ENCODE measurements at regions of chr7 and their contacts with region 1.

Region 1: GRCh38 chr7:56074371-56074791 is 10.3 kb downstream of the SUMF2 start:
- DNase-seq: peak; percentile 77
- H3K4me3 Mint-ChIP-seq: no peak overlapping the region
- H3K27ac Mint-ChIP-seq: no peak overlapping the region
- H3K4me1 Mint-ChIP-seq: peaks cover 4% of the 10 kb centered on the region
- H3K27me3 Mint-ChIP-seq: no peaks in the 10 kb centered on the region

Region 2: DNA sequence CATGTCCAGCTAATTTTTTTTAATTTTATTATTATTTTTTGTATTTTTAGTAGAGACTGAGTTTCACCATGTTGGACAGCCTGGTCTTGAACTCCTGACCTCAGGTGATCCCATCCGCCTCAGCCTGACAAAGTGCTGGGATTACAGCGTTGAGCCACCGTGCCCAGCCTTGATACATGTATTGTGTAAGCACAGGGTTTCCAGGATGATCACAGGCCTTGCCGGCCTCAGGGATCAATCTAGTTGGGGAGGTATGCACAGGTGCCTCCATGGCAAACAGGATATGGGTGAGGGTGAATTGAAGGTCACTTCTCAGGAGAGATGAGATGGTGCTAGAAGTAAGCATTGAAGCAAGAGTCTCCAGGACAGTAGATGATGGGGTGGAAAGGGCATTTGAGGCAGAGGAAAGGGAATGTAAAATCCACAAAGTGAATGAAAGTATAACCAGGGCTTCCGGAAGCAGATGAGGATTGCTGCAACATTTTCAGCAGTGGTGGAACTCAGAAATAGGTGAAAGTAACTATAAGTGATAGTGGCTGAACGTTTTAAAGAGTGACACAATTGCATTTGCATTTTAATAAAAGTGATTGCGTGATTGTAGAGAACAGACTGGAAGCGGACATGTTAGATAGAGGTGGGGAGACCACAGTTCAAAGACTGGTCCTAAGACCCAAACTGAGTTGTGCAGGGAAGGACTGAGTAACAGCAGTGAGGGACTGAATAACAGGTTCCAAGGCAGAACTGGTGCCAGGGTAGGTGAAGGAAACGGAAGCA is 117.0 kb before region 1 on chr7:
- CTCF ChIA-PET with region 1: no interaction called
- POLR2A ChIA-PET with region 1: no interaction called
- intact Hi-C with region 1: no loop called
- DNase-seq: no peak
- H3K4me3 Mint-ChIP-seq: no peak overlapping the region
- H3K27ac Mint-ChIP-seq: no peak overlapping the region
- H3K4me1 Mint-ChIP-seq: peaks cover 13% of the 10 kb centered on the region
- H3K27me3 Mint-ChIP-seq: no peaks in the 10 kb centered on the region

Region 3: GRCh38 chr7:55996856-55997500 is 77.4 kb before region 1 on chr7:
- CTCF ChIA-PET with region 1: interaction called, 15 read pairs
- POLR2A ChIA-PET with region 1: no interaction called
- intact Hi-C with region 1: no loop called
- DNase-seq: no peak
- H3K4me3 Mint-ChIP-seq: no peak overlapping the region
- H3K27ac Mint-ChIP-seq: no peak overlapping the region
- H3K4me1 Mint-ChIP-seq: peaks cover 18% of the 10 kb centered on the region
- H3K27me3 Mint-ChIP-seq: no peaks in the 10 kb centered on the region

Region 4: DNA sequence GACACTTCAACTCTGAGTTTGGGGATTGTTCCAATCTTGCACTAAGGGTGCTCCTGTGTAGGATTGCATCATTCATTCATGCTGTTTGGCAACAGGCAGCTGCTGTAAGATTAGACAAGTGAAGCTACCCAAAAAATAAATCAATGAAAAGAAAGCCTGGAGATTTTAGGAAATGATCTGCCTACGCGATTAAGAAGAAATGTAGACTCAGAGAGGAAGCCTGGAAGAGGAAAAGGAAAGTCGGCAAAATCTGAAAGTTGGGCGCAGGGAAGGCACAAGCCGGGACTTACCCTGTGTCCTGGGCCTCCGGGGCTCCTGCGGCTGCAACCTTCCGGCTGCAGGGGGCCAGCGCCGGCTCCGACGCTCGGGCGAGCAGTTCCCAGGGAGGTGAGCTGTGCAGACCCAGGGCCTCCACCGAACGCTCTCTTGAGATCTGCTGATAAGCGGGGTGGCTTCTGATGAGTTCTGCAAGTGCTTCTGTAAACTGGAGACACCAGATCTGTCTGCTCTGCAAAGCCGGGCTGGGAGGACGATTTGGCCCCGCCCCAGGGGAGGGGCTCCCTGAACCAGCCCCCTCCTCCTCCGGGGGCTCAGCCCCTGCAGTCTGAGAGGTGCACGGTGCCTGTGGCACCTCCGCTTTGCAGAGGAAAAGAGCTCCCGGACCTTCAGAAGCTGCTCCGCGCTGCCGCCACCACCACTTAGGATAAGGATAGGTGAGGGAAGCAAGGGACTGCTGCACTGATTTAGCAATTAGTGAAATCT is 40.5 kb before region 1 on chr7:
- CTCF ChIA-PET with region 1: interaction called, 20 read pairs
- POLR2A ChIA-PET with region 1: no interaction called
- intact Hi-C with region 1: no loop called
- DNase-seq: peak; percentile 72
- H3K4me3 Mint-ChIP-seq: peak overlapping the region; percentile 75
- H3K27ac Mint-ChIP-seq: peak overlapping the region; percentile 43
- H3K4me1 Mint-ChIP-seq: peaks cover 8% of the 10 kb centered on the region
- H3K27me3 Mint-ChIP-seq: no peaks in the 10 kb centered on the region

Region 5: GRCh38 chr7:56063882-56064625 is 10.3 kb before region 1 on chr7 and contains the start of gene SUMF2:
- CTCF ChIA-PET with region 1: interaction called, 34 read pairs
- POLR2A ChIA-PET with region 1: interaction called, 4 read pairs
- intact Hi-C with region 1: no loop called
- DNase-seq: peak; percentile 92
- H3K4me3 Mint-ChIP-seq: peak within 1 kb of the TSS; percentile 87
- H3K27ac Mint-ChIP-seq: peak within 1 kb of the TSS; percentile 86
- H3K4me1 Mint-ChIP-seq: peaks cover 40% of the 10 kb centered on the region
- H3K27me3 Mint-ChIP-seq: peaks cover 1% of the 10 kb centered on the region
- total RNA-seq, gene SUMF2: 130 to 133 TPM

Region 6: DNA sequence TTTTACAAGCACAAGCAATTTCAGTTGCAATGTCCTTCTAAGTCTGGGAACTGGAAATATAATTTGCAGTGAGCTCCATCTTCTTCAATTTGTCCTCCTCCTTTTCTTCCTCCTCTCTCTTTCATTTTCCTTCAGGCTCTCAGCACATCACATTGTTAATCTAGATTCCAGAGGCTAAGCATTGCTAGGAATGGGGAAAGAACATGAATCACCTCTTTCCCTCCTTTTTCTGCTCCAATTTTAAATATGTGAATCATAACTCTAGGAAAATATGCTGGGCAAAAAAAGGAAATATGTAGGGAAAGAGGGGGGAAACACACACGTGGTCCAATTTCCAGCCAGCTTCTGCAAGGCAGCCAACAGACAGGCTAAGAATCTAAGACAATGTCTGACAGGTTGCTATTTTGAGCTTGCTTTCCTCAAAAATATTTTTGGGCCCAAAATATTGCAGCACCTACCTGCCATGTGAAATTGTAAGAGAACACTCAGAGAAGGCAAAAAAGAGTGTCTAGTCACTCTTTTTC is 114.5 kb after region 1 on chr7:
- CTCF ChIA-PET with region 1: no interaction called
- POLR2A ChIA-PET with region 1: no interaction called
- intact Hi-C with region 1: no loop called
- DNase-seq: no peak
- H3K4me3 Mint-ChIP-seq: no peak overlapping the region
- H3K27ac Mint-ChIP-seq: no peak overlapping the region
- H3K4me1 Mint-ChIP-seq: no peaks in the 10 kb centered on the region
- H3K27me3 Mint-ChIP-seq: no peaks in the 10 kb centered on the region

Region 7: GRCh38 chr7:56206420-56206819 is 132.0 kb after region 1 on chr7:
- CTCF ChIA-PET with region 1: no interaction called
- POLR2A ChIA-PET with region 1: no interaction called
- intact Hi-C with region 1: no loop called
- DNase-seq: no peak
- H3K4me3 Mint-ChIP-seq: no peak overlapping the region
- H3K27ac Mint-ChIP-seq: no peak overlapping the region
- H3K4me1 Mint-ChIP-seq: no peaks in the 10 kb centered on the region
- H3K27me3 Mint-ChIP-seq: peaks cover 2% of the 10 kb centered on the region

Measured in activated CD4-positive, alpha-beta memory T cell treated with anti-CD3 and anti-CD28 coated beads for 36 hours (primary cell).